Panc1 (cell line): ENCODE measurements at regions of chr17 and their contacts with region 1.

Region 1: DNA sequence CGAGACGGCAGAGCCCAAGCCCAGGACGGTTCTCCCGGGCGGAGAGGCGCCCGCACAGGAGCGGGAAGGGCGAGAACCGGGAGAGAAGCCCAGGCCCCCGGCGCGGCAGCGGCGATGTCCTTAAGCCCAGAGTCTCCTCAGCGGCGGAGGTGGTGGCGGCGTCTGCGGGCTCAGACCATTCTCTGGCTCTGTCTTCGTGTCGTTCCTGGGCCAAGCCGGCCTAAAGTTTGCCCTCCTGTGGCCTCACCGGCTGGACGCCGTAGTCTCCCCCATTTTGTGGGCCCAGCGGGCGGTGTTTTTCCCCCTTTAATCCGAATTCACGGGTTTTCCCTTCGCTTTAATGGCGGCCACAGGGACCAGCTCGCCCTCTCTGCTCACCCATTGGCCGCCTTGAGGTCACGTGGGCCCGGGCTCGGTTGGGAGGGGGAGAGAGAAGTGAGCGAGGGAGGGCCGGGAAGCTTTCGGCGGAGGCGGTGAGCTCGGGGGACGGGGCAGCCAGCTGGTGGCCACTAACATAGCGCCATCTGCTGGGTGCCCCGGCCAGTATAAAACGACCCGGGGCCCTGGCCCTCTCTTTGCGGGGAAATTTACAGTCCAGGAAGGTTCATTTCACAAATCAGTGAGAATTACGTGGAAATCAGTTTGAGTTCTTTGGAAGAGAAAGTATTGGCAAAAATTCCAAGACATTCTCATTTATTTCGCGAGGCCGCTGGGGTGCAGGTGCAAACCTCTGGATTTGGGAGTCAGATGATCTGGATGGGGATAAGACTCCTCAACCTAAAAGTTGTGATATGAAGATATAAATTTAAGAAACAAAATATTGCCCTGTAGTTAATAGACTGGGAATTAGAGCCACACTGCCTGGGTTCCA is 755 bp upstream of the MED13 start:
- DNase-seq: peak; percentile 74
- ATAC-seq: peak; percentile 99
- H3K4me3 ChIP-seq: peak overlapping the region; percentile 92 to 97
- H3K27ac ChIP-seq: peak overlapping the region; percentile 95
- H3K4me1 ChIP-seq: peaks cover 13% of the 10 kb centered on the region
- H3K27me3 ChIP-seq: no peaks in the 10 kb centered on the region
- CTCF ChIP-seq: peak; percentile 98

Region 2: DNA sequence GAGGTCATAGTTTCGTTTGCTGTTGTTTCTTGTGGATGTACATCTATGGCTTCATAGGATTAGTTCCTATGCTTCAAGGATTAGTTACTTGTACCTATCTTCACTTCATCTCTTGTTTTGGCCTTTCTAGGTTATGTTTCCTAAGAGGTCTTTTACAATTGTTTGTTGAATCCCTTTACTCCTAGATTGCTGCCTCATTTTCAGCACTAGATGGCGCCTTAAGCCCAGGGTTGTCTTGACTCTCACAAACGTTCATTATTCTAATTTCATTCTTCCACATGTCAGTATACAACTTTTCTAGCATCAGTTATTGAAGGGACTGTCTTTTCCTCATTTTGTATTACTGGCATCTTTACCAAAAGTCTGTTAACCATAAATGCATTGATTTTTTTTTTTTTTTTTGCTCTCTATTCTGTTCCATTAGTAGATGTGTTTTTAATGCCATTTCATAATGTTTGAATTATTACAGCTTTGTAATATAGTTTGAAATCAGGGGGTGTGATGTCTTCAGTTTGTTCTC is 429.9 kb before region 1 on chr17:
- CTCF ChIA-PET with region 1: no interaction called
- POLR2A ChIA-PET with region 1: no interaction called
- in situ Hi-C with region 1: no loop called
- intact Hi-C with region 1: loop called (anchors 5 kb)
- DNase-seq: peak; percentile 47
- ATAC-seq: peak; percentile 85
- H3K4me3 ChIP-seq: no peak overlapping the region
- H3K27ac ChIP-seq: no peak overlapping the region
- H3K4me1 ChIP-seq: no peaks in the 10 kb centered on the region
- H3K27me3 ChIP-seq: no peaks in the 10 kb centered on the region
- CTCF ChIP-seq: peak; percentile 78

Region 3: DNA sequence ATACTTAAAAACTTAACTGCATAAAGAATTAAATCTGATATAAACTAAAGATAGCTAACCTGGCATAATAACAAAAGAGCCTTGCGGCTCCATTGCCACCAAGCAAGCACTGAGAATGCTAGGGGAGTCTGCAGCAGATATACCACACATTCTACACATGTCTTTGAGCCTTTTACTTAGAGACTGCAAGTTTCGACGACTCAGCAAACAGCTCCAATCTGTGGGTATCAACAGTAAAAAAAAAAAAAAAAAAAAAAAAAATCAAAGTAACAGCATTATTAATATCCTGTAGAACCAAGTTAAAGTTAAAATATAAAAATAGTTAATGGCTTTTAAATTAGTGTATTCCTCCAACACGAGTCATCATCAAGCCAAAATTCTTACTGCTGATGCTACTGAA is 110.2 kb before region 1 on chr17:
- CTCF ChIA-PET with region 1: interaction called, 10 read pairs
- POLR2A ChIA-PET with region 1: no interaction called
- in situ Hi-C with region 1: no loop called
- intact Hi-C with region 1: no loop called
- DNase-seq: no peak
- ATAC-seq: no peak
- H3K4me3 ChIP-seq: no peak overlapping the region
- H3K27ac ChIP-seq: no peak overlapping the region
- H3K4me1 ChIP-seq: no peaks in the 10 kb centered on the region
- H3K27me3 ChIP-seq: no peaks in the 10 kb centered on the region
- CTCF ChIP-seq: no peak

Region 4: DNA sequence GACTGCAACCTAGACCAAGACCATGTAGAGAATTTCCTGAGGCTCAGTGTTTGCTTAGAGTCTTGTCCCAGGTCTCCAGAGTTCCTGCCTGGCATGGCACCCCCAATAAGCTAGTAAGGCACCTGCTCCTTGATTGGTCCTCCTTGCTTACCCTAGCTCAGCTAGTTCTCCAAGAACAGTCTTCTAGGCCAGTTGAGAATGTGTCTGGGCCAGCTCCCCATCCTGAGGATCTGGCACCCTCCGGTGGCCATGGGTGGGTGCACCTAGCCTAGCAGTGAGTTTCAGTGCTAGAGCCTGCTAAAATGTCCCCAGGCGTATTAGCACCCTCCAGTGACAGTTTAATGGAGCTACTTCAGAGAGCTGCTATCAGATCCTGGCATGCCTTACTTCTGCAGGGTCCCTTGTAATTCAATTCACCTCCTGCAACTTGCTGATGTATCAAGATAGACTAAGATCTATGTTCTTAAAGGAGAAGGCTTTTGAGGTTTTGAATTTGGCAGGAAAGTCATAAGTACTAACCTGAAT is 43.6 kb after region 1 on chr17:
- CTCF ChIA-PET with region 1: interaction called, 10 read pairs
- POLR2A ChIA-PET with region 1: no interaction called
- in situ Hi-C with region 1: no loop called
- intact Hi-C with region 1: no loop called
- DNase-seq: peak; percentile 82
- ATAC-seq: peak; percentile 98
- H3K4me3 ChIP-seq: no peak overlapping the region
- H3K27ac ChIP-seq: no peak overlapping the region
- H3K4me1 ChIP-seq: peaks cover 4% of the 10 kb centered on the region; the same call in 1 of the 2 replicates
- H3K27me3 ChIP-seq: no peaks in the 10 kb centered on the region
- CTCF ChIP-seq: peak; percentile 90

Region 5: GRCh38 chr17:62119373-62119772 is 53.5 kb after region 1 on chr17:
- CTCF ChIA-PET with region 1: no interaction called
- POLR2A ChIA-PET with region 1: interaction called, 13 read pairs
- in situ Hi-C with region 1: no loop called
- intact Hi-C with region 1: no loop called
- DNase-seq: no peak
- ATAC-seq: no peak
- H3K4me3 ChIP-seq: no peak overlapping the region
- H3K27ac ChIP-seq: no peak overlapping the region
- H3K4me1 ChIP-seq: no peaks in the 10 kb centered on the region
- H3K27me3 ChIP-seq: no peaks in the 10 kb centered on the region
- CTCF ChIP-seq: no peak

Region 6: GRCh38 chr17:62187681-62188080 is 121.8 kb after region 1 on chr17:
- CTCF ChIA-PET with region 1: no interaction called
- POLR2A ChIA-PET with region 1: no interaction called
- in situ Hi-C with region 1: no loop called
- intact Hi-C with region 1: no loop called
- DNase-seq: no peak
- ATAC-seq: no peak
- H3K4me3 ChIP-seq: no peak overlapping the region
- H3K27ac ChIP-seq: no peak overlapping the region
- H3K4me1 ChIP-seq: no peaks in the 10 kb centered on the region
- H3K27me3 ChIP-seq: no peaks in the 10 kb centered on the region
- CTCF ChIP-seq: no peak